ENCODE measurements at regions of chr6 and their contacts with region 1.

Region 1: GRCh38 chr6:72522719-72523141 is 99.1 kb upstream of the KCNQ5 start:
- DNase-seq: peak; percentile 11 to 68 (median 28)
- ATAC-seq: peak; percentile 93
- H3K4me3 ChIP-seq: no peak overlapping the region
- H3K27ac ChIP-seq: no peak overlapping the region
- H3K4me1 ChIP-seq: peaks cover 0 to 5% of the 10 kb centered on the region in 2 experiments; a peak in 2 of 5 replicates
- H3K27me3 ChIP-seq: no peaks in the 10 kb centered on the region
- CTCF ChIP-seq: peak; percentile 58 to 94 (median 67)
- EP300 ChIP-seq: no peak
- POLR2A ChIP-seq: no peak
- RAD21 ChIP-seq: peak in 1 of 2 experiments; percentile 48; a peak in 2 of 4 replicates

Region 2: DNA sequence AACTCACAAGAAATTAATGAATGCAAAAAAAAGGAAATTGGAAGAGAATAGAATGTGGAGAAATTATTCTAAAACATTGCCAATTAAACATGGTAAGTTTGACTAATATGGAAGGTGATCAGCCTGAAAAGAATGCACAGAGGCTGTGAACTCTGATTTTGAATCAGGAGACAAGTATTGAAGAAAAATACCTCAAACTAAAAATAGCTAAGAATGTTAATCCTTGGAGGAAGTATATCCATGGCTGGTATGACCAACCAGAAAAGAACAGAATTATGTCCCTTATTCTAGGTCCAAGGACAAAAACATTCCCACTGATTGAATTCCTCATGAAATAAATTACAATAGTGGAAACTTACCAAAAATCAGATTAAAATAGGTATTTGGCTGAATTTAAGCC is 643.7 kb before region 1 on chr6:
- CTCF ChIA-PET with region 1: no interaction called
- POLR2A ChIA-PET with region 1: no interaction called
- in situ Hi-C with region 1: no loop called
- intact Hi-C with region 1: no loop called
- DNase-seq: no peak
- ATAC-seq: no peak
- H3K4me3 ChIP-seq: no peak overlapping the region
- H3K27ac ChIP-seq: no peak overlapping the region
- H3K4me1 ChIP-seq: no peaks in the 10 kb centered on the region
- H3K27me3 ChIP-seq: no peaks in the 10 kb centered on the region
- CTCF ChIP-seq: no peak
- EP300 ChIP-seq: no peak
- POLR2A ChIP-seq: no peak
- RAD21 ChIP-seq: no peak

Region 3: GRCh38 chr6:72495441-72495840 is 27.3 kb before region 1 on chr6:
- CTCF ChIA-PET with region 1: no interaction called
- POLR2A ChIA-PET with region 1: no interaction called
- in situ Hi-C with region 1: no loop called
- intact Hi-C with region 1: no loop called
- DNase-seq: no peak
- ATAC-seq: no peak
- H3K4me3 ChIP-seq: no peak overlapping the region
- H3K27ac ChIP-seq: no peak overlapping the region
- H3K4me1 ChIP-seq: no peaks in the 10 kb centered on the region
- H3K27me3 ChIP-seq: no peaks in the 10 kb centered on the region
- CTCF ChIP-seq: no peak
- EP300 ChIP-seq: no peak
- POLR2A ChIP-seq: no peak
- RAD21 ChIP-seq: no peak

Region 4: DNA sequence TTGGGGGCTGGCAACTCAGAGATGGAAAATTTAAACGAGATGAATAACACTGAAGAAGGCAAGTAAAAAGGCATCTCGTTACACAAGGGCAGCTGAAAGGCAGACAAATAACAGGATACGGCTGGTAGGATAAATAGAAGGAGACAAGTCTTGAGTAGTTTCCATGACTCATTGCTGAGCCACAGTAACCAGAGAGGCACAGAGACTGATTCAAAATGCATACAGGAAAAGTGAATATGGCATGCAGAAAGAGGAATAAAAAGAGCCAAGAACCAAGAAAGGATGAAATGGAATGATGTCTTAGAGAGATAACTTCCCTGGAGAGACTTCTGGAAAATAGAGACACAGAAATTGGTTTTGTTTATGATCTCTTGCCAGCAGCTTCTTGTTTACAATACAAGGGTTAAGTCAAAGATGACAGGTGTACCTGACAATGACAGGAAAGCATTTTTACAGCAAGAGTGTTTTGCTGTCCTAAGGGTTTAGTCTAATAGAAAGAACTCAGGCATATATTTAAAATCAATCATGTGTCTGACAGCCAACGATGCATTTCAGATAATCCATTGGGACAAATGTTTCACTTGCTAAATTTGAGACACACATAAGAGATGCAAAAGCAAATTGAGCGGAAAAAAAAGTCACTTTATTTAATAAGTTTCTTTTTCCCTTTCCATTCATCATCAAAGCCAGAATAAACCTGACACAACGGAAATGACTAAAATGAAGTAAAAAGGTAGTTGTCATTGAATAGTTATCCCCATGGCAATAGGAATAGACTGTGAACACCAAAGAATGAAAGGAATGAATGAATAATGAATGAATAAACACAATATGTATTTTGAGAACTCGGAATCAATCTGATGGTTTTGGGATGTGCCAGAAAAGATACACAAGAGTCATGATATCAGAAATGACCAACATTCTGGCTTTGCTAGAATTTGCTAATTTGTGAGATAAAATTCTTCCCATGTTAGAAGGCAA is 31.1 kb after region 1 on chr6:
- CTCF ChIA-PET with region 1: no interaction called
- POLR2A ChIA-PET with region 1: no interaction called
- in situ Hi-C with region 1: no loop called
- intact Hi-C with region 1: loop called (anchors 2 kb)
- DNase-seq: peak; percentile 17 to 64 (median 32)
- ATAC-seq: peak; percentile 81
- H3K4me3 ChIP-seq: no peak overlapping the region
- H3K27ac ChIP-seq: peak overlapping the region; percentile 68; the same call in 2 of the 3 replicates
- H3K4me1 ChIP-seq: peaks cover 3 to 35% of the 10 kb centered on the region in 2 experiments
- H3K27me3 ChIP-seq: no peaks in the 10 kb centered on the region
- CTCF ChIP-seq: no peak
- EP300 ChIP-seq: no peak; the same call in 1 of the 2 replicates
- POLR2A ChIP-seq: no peak
- RAD21 ChIP-seq: no peak

Region 5: DNA sequence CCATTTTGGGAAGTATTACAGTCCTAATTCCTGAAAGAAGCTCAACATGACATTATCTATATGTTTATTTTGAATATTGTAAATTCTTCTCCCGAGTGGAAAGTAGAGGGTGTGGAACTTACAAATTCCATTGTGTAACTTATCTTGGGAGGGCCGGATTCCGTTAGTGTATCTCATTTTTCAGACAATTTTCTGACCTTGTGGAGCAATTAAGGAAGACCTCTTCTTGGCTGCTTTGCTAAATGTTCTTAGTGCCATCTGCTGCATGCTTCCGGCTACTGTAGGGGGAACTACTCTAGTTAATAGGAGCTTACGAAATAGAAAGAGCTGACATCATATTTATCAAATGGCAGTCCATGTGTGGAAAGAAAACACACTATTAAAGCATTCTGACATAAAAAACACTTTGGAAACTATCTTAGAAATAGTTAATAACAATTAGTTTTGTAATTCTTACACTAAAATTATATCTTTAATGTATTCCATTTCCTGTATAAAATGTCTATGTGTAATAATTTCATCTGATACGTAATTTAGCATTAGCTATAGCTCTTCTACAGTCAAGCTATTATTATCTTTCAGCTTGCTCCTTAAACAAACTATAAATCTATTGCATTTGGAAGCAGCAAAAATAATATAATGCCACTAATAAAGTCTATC is 57.7 kb after region 1 on chr6:
- CTCF ChIA-PET with region 1: interaction called, 3 read pairs
- POLR2A ChIA-PET with region 1: no interaction called
- in situ Hi-C with region 1: loop called (anchors 5 kb)
- intact Hi-C with region 1: loop called (anchors 5 kb)
- DNase-seq: peak; percentile 44 to 88 (median 64)
- ATAC-seq: peak; percentile 99
- H3K4me3 ChIP-seq: no peak overlapping the region
- H3K27ac ChIP-seq: peak overlapping the region; percentile 24; the same call in 2 of the 3 replicates
- H3K4me1 ChIP-seq: no peaks in the 10 kb centered on the region; a peak in 1 of 5 replicates
- H3K27me3 ChIP-seq: no peaks in the 10 kb centered on the region
- CTCF ChIP-seq: peak; percentile 82 to 98 (median 95)
- EP300 ChIP-seq: no peak
- POLR2A ChIP-seq: no peak
- RAD21 ChIP-seq: peak; percentile 100

Measured in K562 (cell line).